ENCODE measurements at regions of chr19 and their contacts with region 1.

Region 1: GRCh38 chr19:38634757-38635482 is 12.5 kb upstream of the ACTN4 start:
- DNase-seq: peak; percentile 79
- CTCF ChIP-seq: peak; percentile 89

Region 2: GRCh38 chr19:38351865-38352395 is 283.0 kb before region 1 on chr19:
- in situ Hi-C with region 1: no loop called
- DNase-seq: no peak
- CTCF ChIP-seq: no peak

Region 3: DNA sequence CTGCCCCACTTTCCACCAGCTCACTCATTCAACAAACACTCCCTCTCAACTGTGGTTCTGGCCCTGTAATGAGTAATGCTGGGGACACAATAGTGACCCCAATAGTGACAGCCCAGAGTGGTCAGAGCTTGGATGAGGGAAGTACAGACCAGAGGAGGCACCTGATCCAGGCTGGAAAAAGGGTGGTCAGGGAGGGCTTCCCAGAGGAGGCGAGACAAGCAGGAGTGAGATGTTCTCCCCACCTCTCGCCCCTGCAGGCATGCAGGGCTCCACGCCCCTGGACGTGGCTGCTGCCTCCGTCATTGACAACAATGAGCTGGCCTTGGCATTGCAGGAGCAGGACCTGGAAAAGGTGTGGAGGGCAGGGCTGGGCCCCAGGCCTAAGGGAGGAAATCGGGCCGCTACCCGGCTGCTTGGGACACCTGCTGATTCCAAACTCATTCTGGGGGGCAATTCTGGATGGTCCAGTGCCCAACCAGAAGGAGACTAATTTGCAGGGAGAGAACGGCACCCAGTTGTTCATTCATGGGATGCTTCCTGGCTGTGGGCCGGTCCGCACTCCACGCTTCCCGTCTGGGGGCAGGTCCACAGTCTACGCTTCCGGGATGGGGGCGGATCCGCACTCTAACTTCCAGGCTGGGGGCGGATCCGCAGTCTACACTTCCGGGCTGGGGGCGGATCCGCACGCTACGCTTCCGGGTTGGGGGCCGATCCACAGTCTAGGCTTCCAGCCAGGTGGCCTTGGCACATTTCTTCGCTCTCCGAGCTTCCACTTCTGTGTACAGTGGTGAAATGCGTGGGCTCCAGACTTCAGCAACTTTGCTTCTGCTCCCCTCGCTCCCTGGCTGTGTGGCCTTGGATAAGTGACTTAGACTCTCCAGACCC is 138.1 kb before region 1 on chr19:
- in situ Hi-C with region 1: no loop called
- DNase-seq: no peak
- CTCF ChIP-seq: no peak

Region 4: GRCh38 chr19:38544959-38545315 is 90.0 kb before region 1 on chr19:
- in situ Hi-C with region 1: loop called (anchors 5 kb)
- DNase-seq: no peak
- CTCF ChIP-seq: no peak

Region 5: DNA sequence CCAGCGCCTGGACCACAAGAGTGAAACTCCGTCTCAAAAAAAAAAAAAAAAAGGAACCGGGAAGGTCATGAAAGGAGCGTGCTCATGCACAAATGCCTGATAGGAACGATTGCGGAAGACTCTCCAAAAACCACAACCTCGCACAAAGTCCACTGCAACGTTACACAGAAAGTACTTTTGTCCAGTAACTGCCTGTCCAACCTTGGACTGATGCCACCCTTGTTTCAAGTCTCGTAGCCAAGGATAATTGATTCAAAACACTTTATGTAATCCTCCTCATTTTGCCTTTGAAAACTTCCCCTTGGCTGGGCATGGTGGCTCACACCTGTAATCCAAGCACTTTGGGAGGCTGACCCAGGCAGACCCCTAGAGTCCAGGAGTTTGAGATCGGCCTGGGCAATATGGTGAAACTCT is 124.7 kb after region 1 on chr19:
- in situ Hi-C with region 1: no loop called
- DNase-seq: no peak
- CTCF ChIP-seq: no peak

Region 6: GRCh38 chr19:38792250-38793111 is 157.6 kb after region 1 on chr19:
- in situ Hi-C with region 1: no loop called
- DNase-seq: peak; percentile 67
- CTCF ChIP-seq: peak; percentile 12